ENCODE measurements at regions of chr11 and their contacts with region 1.

Region 1: DNA sequence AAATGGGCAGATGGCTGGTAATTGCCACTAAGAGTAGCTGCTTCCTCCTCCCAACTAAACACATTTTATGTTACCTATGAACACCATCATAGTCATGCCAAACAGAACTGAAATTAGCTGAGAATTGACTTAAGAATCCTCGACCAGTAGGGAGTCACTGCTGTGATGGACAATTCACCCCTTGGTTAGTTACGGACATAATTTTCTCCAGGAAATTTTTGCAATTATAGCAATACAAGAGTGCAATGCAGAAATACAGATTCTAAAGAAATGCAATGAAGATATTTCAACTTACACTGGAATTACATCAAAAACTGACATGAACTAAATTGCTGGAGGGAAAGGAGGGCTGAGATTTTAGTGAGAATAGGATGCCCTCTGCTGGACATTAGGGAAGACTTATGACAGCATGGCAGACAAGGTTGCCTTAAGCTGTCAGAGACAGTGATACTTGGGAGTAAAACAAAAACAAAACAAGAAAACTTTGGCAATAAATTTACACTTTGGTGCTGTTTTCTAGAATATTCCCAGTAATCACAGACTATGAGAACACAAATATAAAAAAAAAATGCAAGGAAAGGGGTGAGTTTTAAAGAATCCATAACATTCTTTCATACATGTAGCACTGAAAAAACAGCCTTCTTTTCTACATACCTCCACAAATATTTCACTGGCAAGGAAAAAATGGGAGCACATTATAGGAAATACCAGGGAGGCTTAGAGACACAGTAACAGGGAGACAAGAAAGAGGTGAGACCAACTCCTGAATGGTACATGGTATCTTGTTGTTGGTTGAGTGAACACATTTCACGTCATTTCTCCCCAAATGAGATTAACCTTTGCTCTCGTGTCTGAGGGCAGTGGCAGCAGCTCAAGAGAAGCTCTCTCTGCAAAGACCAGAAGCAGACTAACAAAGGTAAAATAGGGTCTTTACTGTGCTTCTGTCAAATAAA is 11.2 kb upstream of the PPP2R1B start:
- DNase-seq: peak in 5 of 7 donors; percentile 21 to 49 (median 38)
- H3K4me3 ChIP-seq: no peak overlapping the region
- H3K27ac ChIP-seq: peak overlapping the region in 3 of 5 donors; percentile 32 to 73 (median 43)
- H3K4me1 ChIP-seq: peaks cover 4 to 17% of the 10 kb centered on the region in 2 donors
- H3K27me3 ChIP-seq: no peaks in the 10 kb centered on the region
- CTCF ChIP-seq: peak; percentile 58 to 94 (median 87)
- POLR2A ChIP-seq: no peak

Region 2: DNA sequence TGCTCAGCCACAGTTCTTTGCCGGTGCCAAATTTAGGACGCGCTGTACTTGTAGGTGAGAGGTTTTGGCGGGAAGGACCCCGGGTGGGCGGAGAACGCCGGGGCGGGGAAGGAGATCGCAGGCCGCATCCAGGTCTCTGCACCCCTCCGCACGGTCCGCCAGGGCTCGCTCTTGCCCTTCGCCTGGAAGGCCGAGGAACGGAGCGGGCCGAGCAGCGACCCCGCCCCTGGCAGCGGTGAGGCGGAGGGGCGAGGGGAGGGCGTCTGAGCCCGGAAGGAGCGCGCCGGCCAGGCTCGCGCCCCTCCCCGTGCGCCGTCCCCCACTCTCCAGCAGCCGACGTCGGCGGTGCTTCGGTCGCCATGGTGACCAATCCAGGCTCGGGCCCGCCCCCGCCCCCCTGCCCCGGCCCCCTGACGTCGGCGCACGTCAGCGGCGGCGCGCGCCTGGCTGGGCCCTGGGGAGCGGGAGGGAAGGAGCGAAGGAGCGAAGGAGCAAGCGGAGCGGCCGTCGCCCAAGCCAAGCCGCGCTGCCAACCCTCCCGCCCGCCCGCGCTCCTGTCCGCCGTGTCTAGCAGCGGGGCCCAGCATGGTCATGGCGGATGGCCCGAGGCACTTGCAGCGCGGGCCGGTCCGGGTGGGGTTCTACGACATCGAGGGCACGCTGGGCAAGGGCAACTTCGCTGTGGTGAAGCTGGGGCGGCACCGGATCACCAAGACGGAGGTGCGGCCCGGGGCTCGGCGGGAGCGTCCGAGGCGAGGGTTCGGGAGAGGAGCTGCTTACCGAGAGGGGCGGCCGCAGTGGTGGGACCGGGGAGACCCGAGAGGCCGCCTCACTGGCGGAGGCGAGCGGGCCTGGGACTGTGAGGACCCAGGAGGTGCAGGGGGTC is 175.1 kb before region 1 on chr11 and contains the start of gene SIK2:
- intact Hi-C with region 1: loop called (anchors 5 kb)
- DNase-seq: peak; percentile 95 to 97 (median 96)
- H3K4me3 ChIP-seq: peak within 1 kb of the TSS; percentile 39 to 99 (median 78)
- H3K27ac ChIP-seq: peak within 1 kb of the TSS; percentile 81 to 99 (median 98)
- H3K4me1 ChIP-seq: peaks cover 17 to 41% of the 10 kb centered on the region in 2 donors
- H3K27me3 ChIP-seq: no peaks in the 10 kb centered on the region
- CTCF ChIP-seq: peak; percentile 67 to 99 (median 92)
- POLR2A ChIP-seq: peak; percentile 42 to 70
- total RNA-seq, gene SIK2: 16.2 to 33.0 (median 27.8) TPM

Region 3: GRCh38 chr11:111676878-111677585 is 100.3 kb before region 1 on chr11:
- intact Hi-C with region 1: no loop called
- DNase-seq: no peak
- H3K4me3 ChIP-seq: no peak overlapping the region
- H3K27ac ChIP-seq: no peak overlapping the region
- H3K4me1 ChIP-seq: peaks cover 5 to 8% of the 10 kb centered on the region in 2 donors
- H3K27me3 ChIP-seq: no peaks in the 10 kb centered on the region
- CTCF ChIP-seq: no peak
- POLR2A ChIP-seq: no peak

Measured in adrenal gland (tissue), 19 donors.